IMR-90 (cell line): ENCODE measurements at regions of chr3 and their contacts with region 1.

Region 1: DNA sequence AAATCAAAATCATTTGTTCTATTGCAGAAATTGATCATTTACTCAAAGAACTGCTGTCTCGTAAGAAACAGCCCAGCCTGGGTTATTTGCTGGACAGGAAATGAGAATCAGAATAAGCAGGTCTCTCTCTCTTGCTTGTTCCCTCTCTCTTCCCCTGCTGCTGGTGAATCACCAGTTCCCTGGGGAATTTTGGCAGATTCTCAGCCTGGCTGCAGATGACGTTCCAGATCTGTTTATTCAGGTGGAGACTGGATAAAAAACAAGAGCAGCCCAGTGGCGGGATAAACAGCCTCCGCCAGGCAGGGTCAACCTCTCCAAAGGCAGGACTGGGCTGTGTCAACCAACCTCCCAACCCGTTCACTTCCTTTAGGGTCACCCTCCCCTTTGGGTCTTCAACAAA is 72.1 kb downstream of the LRIG1 start:
- DNase-seq: peak; percentile 100
- ATAC-seq: peak; percentile 66
- H3K4me3 ChIP-seq: no peak overlapping the region
- H3K27ac ChIP-seq: peak overlapping the region; percentile 62
- H3K4me1 ChIP-seq: peaks cover 37% of the 10 kb centered on the region
- H3K27me3 ChIP-seq: no peaks in the 10 kb centered on the region
- CTCF ChIP-seq: no peak
- POLR2A ChIP-seq: peak; percentile 52; the same call in 1 of the 2 replicates
- RAD21 ChIP-seq: peak; percentile 25

Region 2: GRCh38 chr3:66472313-66473134 is 43.8 kb after region 1 on chr3:
- CTCF ChIA-PET with region 1: no interaction called
- POLR2A ChIA-PET with region 1: no interaction called
- dilution Hi-C with region 1: no loop called
- in situ Hi-C with region 1: no loop called
- intact Hi-C with region 1: loop called (anchors 5 kb)
- DNase-seq: peak; percentile 88
- ATAC-seq: peak; percentile 57
- H3K4me3 ChIP-seq: no peak overlapping the region
- H3K27ac ChIP-seq: peak overlapping the region; percentile 25
- H3K4me1 ChIP-seq: peaks cover 21% of the 10 kb centered on the region
- H3K27me3 ChIP-seq: no peaks in the 10 kb centered on the region
- CTCF ChIP-seq: no peak
- POLR2A ChIP-seq: peak; percentile 55; the same call in 1 of the 2 replicates
- RAD21 ChIP-seq: no peak